BJ (cell line): ENCODE measurements at regions of chr3 and their contacts with region 1.

Region 1: DNA sequence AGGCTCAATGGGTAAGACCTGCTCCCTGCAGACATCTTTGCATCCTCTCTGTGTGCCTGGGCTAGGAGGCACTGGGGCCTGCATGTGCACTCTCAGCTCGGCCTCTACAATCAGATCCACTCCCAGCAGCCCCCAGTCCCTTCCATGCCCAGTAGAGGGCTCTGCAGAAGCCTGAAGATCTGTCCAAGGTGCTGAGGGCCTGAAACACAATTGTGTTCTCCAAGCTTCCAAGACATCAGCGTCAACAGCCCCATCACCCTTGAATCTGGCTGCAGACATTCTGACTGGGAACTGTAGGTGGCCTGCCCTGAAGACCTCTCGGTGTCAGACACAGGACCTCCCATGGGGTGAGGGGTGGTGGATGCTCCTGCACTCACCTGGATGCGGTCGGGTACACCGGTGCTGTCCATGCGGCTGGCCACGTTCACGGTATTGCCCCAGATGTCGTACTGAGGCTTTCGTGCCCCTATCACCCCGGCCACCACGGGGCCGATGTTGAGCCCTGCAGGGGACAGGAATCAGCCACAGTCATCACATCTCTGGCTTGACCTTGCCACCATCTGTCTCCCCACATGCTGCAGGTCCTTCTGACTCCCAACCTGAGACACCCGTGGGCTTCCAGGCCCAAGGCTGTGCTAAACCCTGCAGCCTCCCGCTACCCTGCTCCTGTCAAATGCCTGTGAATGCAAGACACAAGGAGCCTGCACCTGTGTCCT is 84.7 kb downstream of the SEC22A start:
- DNase-seq: no peak
- H3K4me3 ChIP-seq: no peak overlapping the region
- H3K27me3 ChIP-seq: no peaks in the 10 kb centered on the region
- CTCF ChIP-seq: peak; percentile 93

Region 2: DNA sequence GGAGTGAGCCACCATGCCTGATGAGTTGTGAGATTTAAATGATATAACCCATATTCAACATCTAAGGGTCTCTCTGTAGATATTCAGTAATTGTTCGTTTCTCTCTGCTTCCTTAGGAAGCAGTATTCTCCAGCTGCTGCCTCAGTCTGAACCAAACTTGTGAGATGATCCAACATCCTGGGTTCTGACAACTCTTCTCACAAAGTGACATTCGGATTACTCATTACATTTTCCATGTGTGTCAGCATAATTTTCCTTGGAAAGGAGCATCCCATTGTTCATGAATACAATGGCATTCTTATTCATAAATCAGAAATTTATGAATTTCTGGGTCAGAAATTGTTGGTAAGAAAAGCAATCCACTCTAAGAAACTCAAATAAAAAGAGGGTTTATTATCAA is 99.8 kb before region 1 on chr3:
- CTCF ChIA-PET with region 1: no interaction called
- POLR2A ChIA-PET with region 1: no interaction called
- DNase-seq: no peak
- H3K4me3 ChIP-seq: no peak overlapping the region
- H3K27me3 ChIP-seq: no peaks in the 10 kb centered on the region
- CTCF ChIP-seq: no peak

Region 3: GRCh38 chr3:123272547-123272946 is 13.9 kb before region 1 on chr3:
- CTCF ChIA-PET with region 1: interaction called, 11 read pairs
- POLR2A ChIA-PET with region 1: no interaction called
- DNase-seq: no peak
- H3K4me3 ChIP-seq: no peak overlapping the region
- H3K27me3 ChIP-seq: no peaks in the 10 kb centered on the region
- CTCF ChIP-seq: no peak